T-cell (primary cell): ENCODE measurements at regions of chr19 and their contacts with region 1.

Region 1: GRCh38 chr19:15303105-15303780 is 29.1 kb downstream of the BRD4 start:
- DNase-seq: no peak
- ATAC-seq: no peak
- H3K4me3 ChIP-seq: no peak overlapping the region
- H3K4me3 Mint-ChIP-seq: peak overlapping the region in 2 of 3 donors; percentile 54 to 60
- H3K27ac ChIP-seq: no peak overlapping the region
- H3K27ac Mint-ChIP-seq: peak overlapping the region; percentile 36 to 62
- H3K4me1 ChIP-seq: peaks cover 29 to 71% of the 10 kb centered on the region in 2 experiments
- H3K4me1 Mint-ChIP-seq: peaks cover 90 to 94% (median 93%) of the 10 kb centered on the region in 3 donors
- H3K27me3 ChIP-seq: no peaks in the 10 kb centered on the region
- H3K27me3 Mint-ChIP-seq: no peaks in the 10 kb centered on the region

Region 2: DNA sequence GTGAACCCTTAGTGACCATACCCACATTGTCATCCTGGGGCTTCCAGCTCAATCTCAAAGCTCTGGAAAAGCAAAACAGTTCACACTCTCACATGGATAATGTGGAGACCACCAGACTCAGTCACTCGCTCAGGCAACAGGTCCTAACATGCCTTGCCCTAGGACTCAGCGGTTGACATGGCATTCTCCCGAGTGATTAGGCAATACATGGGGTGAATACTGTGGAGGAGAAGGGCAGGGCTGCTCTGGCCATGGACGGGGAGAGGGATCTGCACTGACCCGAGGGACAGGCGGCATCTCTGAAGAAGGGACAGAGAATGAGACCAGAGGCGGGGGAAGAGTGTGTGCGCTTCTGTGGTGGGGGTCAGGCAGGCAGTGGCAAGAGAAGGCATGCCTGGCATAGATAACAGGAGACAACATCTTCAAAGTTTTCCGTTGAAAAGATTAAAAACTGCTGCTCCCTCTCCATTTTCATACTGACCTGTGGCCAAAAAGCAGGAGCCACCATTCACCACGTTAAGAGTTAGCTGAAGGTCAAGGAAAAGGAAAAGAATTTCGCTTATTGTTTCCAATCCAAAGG is 26.5 kb before region 1 on chr19:
- CTCF ChIA-PET with region 1: no interaction called
- POLR2A ChIA-PET with region 1: no interaction called
- DNase-seq: no peak
- ATAC-seq: no peak
- H3K4me3 ChIP-seq: no peak overlapping the region
- H3K4me3 Mint-ChIP-seq: peak overlapping the region in 1 of 3 donors; percentile 39
- H3K27ac ChIP-seq: no peak overlapping the region
- H3K27ac Mint-ChIP-seq: peak overlapping the region in 1 of 2 donors; percentile 46
- H3K4me1 ChIP-seq: peaks cover 0 to 79% of the 10 kb centered on the region in 2 experiments
- H3K4me1 Mint-ChIP-seq: peaks cover 80 to 89% (median 83%) of the 10 kb centered on the region in 3 donors
- H3K27me3 ChIP-seq: no peaks in the 10 kb centered on the region
- H3K27me3 Mint-ChIP-seq: no peaks in the 10 kb centered on the region

Region 3: GRCh38 chr19:15317392-15318071 is 14.3 kb after region 1 on chr19:
- CTCF ChIA-PET with region 1: no interaction called
- POLR2A ChIA-PET with region 1: interaction called, 10 to 14 read pairs
- DNase-seq: no peak
- ATAC-seq: no peak
- H3K4me3 ChIP-seq: no peak overlapping the region
- H3K4me3 Mint-ChIP-seq: peak overlapping the region; percentile 49 to 68 (median 64)
- H3K27ac ChIP-seq: no peak overlapping the region
- H3K27ac Mint-ChIP-seq: peak overlapping the region in 1 of 2 donors; percentile 29
- H3K4me1 ChIP-seq: peaks cover 27 to 72% of the 10 kb centered on the region in 2 experiments
- H3K4me1 Mint-ChIP-seq: peaks cover 87 to 92% (median 88%) of the 10 kb centered on the region in 3 donors
- H3K27me3 ChIP-seq: no peaks in the 10 kb centered on the region
- H3K27me3 Mint-ChIP-seq: no peaks in the 10 kb centered on the region

Region 4: GRCh38 chr19:15340086-15340485 is 36.8 kb after region 1 on chr19:
- CTCF ChIA-PET with region 1: no interaction called
- POLR2A ChIA-PET with region 1: no interaction called
- DNase-seq: no peak
- ATAC-seq: no peak
- H3K4me3 ChIP-seq: no peak overlapping the region
- H3K4me3 Mint-ChIP-seq: no peak overlapping the region
- H3K27ac ChIP-seq: no peak overlapping the region
- H3K27ac Mint-ChIP-seq: no peak overlapping the region
- H3K4me1 ChIP-seq: no peaks in the 10 kb centered on the region
- H3K4me1 Mint-ChIP-seq: peaks cover 0 to 2% (median 0%) of the 10 kb centered on the region in 3 donors
- H3K27me3 ChIP-seq: no peaks in the 10 kb centered on the region
- H3K27me3 Mint-ChIP-seq: no peaks in the 10 kb centered on the region